Activated B cell treated with CpG ODN at 0.5 μM for 24 hours (primary cell): ENCODE measurements at regions of chr12 and their contacts with region 1.

Region 1: DNA sequence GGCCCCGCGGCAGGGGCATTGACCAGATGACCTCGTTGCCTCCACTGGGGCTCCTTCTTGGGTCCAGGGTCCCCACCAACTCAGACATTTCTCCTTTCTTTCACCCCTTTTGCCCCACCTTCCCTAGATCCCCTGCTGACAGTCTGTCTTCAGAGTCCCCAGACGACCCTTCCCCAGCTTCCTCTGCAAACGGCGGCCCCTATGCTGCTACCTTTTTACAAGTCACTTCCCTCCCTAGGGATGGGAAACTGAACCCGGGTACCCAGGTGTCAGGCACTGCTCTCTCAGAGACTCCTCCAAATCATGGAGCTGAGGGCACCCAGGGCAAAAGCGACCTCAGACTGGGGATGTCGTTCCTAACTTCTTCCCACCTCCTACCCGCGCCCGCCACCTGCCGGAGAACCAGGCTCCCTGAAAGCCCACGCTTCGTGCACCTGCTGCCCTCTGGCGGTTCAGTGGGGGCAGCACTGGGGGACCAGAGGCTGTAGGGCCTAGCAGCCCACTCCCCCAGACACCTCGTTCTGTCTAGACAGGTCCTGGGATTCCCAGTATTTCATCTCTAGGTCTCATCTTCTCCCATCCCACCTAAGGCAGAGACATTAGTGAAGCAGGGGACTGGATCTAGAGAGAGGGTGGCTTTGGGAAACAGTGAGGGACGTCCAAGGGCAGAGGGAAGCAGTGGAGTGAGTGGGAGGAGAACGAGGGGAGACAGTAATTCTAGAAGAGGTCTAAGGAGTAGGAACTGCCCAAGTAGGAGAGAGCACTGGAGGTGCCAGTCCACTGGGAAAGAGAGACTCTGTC is 4.9 kb downstream of the ZNF385A start:
- DNase-seq: peak; percentile 84
- ATAC-seq: peak; percentile 92
- H3K4me3 Mint-ChIP-seq: peak overlapping the region; percentile 65
- H3K27ac Mint-ChIP-seq: peak overlapping the region; percentile 24
- H3K4me1 Mint-ChIP-seq: peaks cover 38% of the 10 kb centered on the region
- H3K27me3 Mint-ChIP-seq: no peaks in the 10 kb centered on the region
- CTCF ChIP-seq: peak; percentile 99

Region 2: DNA sequence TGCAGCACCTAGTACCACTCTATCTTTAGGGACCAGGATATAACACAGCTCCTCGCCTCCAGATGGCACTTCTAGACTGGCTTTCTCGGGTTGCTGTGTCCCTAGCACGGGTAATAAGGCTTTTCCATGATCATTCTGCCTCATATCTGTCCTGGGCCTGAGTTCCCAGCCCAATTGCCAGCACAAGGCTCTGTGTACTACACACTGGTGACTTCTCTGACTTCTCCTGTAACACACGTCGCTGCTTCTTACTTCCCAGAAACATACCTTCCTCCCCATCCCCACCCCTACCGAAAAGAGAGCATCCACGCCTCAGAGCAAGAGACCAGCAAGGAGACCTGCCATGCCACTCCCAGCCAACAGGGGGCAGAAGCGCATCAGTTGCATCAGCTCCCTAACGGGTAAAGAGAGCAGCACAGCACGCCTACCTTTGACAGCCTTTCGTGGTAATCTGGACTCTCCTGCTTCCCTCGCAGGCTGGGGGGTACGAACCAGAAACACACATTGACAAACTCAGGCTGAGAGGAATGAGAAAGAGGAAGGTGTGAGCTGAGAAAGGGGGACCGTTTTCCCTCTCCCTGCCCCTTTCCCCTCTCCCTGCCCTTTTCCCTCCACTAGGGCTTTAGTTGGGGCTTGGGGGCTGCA is 1220.3 kb before region 1 on chr12:
- CTCF ChIA-PET with region 1: no interaction called
- POLR2A ChIA-PET with region 1: no interaction called
- intact Hi-C with region 1: no loop called
- DNase-seq: peak; percentile 78
- ATAC-seq: peak; percentile 100
- H3K4me3 Mint-ChIP-seq: no peak overlapping the region
- H3K27ac Mint-ChIP-seq: no peak overlapping the region
- H3K4me1 Mint-ChIP-seq: peaks cover 5% of the 10 kb centered on the region
- H3K27me3 Mint-ChIP-seq: no peaks in the 10 kb centered on the region
- CTCF ChIP-seq: peak; percentile 13

Region 3: GRCh38 chr12:54220092-54220557 is 159.5 kb before region 1 on chr12:
- CTCF ChIA-PET with region 1: interaction called, 8 read pairs
- POLR2A ChIA-PET with region 1: interaction called, 5 read pairs
- intact Hi-C with region 1: loop called (anchors 1 kb)
- DNase-seq: peak; percentile 58
- ATAC-seq: peak; percentile 49
- H3K4me3 Mint-ChIP-seq: no peak overlapping the region
- H3K27ac Mint-ChIP-seq: no peak overlapping the region
- H3K4me1 Mint-ChIP-seq: peaks cover 35% of the 10 kb centered on the region
- H3K27me3 Mint-ChIP-seq: no peaks in the 10 kb centered on the region
- CTCF ChIP-seq: no peak

Region 4: GRCh38 chr12:54337280-54337842 is 42.2 kb before region 1 on chr12:
- CTCF ChIA-PET with region 1: interaction called, 17 read pairs
- POLR2A ChIA-PET with region 1: interaction called, 5 read pairs
- intact Hi-C with region 1: no loop called
- DNase-seq: no peak
- ATAC-seq: no peak
- H3K4me3 Mint-ChIP-seq: no peak overlapping the region
- H3K27ac Mint-ChIP-seq: no peak overlapping the region
- H3K4me1 Mint-ChIP-seq: peaks cover 9% of the 10 kb centered on the region
- H3K27me3 Mint-ChIP-seq: no peaks in the 10 kb centered on the region
- CTCF ChIP-seq: no peak

Region 5: DNA sequence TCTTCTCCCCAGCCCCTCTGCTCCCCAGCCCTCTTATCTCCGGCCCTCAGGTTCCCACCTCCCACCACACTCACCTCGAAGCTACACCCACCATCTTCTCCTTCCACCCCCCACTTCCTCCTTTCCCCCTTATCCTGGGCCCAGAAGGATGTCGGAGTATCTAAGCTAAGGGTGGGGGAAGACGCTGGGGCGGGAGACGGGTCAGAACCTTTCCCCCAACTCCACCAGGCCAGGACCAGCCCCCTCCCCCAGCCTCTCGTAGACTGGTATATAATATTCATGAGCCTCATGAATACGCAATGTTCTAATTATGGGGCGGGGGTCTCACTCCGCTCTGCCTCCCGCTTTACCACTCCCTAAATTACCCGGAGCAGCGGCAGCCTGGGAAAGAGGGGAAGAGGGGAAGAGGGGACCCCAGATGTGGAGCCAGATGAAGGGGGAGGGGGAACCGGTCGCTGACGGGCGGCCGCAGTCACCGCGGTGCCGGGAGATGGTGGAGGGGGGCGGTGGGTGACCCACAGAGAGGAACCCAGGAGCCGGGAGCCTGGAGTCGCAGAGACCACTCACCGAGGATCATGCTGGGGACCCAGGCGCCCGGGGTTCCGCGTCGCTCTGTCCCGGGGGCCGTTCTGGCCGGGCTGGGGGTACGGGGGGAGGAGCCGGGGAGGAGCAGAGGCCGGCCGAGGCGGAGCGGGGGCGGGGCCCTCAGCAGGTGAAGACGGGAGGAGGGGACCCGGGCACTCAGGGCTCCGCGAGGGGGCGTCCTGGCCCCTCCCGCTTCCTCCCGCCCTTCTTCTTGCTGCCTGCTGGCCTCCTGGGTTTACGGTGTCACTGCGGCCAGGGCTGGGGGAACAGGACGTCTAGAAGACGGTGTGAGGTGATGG is 11.3 kb after region 1 on chr12:
- CTCF ChIA-PET with region 1: interaction called, 15 read pairs
- POLR2A ChIA-PET with region 1: interaction called, 9 read pairs
- intact Hi-C with region 1: loop called (anchors 1 kb)
- DNase-seq: peak; percentile 74
- ATAC-seq: peak; percentile 96
- H3K4me3 Mint-ChIP-seq: peak overlapping the region; percentile 83
- H3K27ac Mint-ChIP-seq: peak overlapping the region; percentile 41
- H3K4me1 Mint-ChIP-seq: peaks cover 63% of the 10 kb centered on the region
- H3K27me3 Mint-ChIP-seq: no peaks in the 10 kb centered on the region
- CTCF ChIP-seq: no peak

Region 6: GRCh38 chr12:54431911-54432814 is 52.6 kb after region 1 on chr12:
- CTCF ChIA-PET with region 1: no interaction called
- POLR2A ChIA-PET with region 1: no interaction called
- intact Hi-C with region 1: no loop called
- DNase-seq: no peak
- ATAC-seq: no peak
- H3K4me3 Mint-ChIP-seq: no peak overlapping the region
- H3K27ac Mint-ChIP-seq: no peak overlapping the region
- H3K4me1 Mint-ChIP-seq: peaks cover 9% of the 10 kb centered on the region
- H3K27me3 Mint-ChIP-seq: peaks cover 14% of the 10 kb centered on the region
- CTCF ChIP-seq: no peak